IMR-90 (cell line): ENCODE measurements at regions of chr1 and their contacts with region 1.

Region 1: DNA sequence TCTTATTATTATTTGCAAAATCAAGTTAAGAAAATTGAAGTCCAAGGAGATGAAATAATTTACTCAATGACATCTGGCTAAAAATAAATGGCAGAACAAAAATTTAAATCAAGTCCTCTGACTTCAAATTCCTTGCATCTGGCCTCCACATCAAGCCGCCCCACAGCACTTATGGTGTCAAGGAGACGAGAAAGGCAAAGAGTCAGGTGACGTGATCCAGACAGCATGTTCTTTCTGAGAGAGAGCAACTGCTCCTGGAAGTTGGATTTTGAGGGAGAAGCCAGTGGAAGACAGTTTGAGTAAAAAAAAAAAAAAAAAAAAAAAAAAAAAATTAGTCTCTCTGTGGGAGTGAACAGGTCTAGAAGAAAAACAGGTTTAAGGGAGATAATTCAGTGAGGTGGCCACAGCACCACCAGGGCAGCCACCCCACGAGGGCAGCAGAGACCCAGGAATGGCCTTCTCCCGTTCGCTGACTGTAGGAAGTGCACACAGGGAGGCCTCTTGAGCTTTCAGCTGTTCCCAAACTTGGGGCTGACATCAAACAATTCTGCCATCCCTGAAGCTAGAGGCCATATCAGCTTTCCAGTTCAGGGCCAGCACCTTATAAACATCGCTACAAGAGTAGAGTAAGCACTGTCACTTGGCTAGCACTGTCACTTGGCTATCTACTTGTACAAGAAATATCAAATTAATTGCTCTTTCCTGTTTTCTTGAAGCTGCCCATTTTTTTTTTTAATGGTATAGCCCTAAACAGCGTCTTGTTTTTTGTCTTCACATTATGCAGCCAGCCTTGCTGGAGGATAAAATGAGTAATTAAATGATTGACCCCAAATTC is 7.8 kb downstream of the C1orf162 start:
- DNase-seq: peak; percentile 66
- ATAC-seq: peak; percentile 99
- H3K4me3 ChIP-seq: no peak overlapping the region
- H3K27ac ChIP-seq: no peak overlapping the region
- H3K4me1 ChIP-seq: no peaks in the 10 kb centered on the region
- H3K27me3 ChIP-seq: no peaks in the 10 kb centered on the region
- CTCF ChIP-seq: peak; percentile 92
- POLR2A ChIP-seq: peak; percentile 28; the same call in 1 of the 2 replicates
- RAD21 ChIP-seq: peak; percentile 95

Region 2: DNA sequence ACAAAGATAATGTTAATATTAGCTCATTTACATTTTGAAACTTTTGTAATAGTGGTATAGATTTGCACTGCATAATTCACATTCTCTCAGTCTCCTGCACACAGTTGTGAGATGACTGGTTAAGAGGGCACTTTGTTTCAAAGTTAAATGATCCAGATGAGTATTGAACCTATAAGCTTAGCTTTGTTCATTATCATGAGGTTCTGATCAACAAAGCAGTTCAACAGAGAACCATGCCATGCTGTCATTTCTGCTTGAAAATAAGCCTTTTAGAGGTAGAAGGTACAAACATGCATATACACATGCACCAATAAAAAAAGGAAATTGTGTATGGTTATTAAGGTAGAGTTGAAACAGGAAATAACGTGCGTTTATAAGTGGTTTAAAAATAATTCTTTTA is 142.8 kb after region 1 on chr1:
- CTCF ChIA-PET with region 1: no interaction called
- POLR2A ChIA-PET with region 1: no interaction called
- dilution Hi-C with region 1: no loop called
- in situ Hi-C with region 1: no loop called
- intact Hi-C with region 1: no loop called
- DNase-seq: no peak
- ATAC-seq: no peak
- H3K4me3 ChIP-seq: no peak overlapping the region
- H3K27ac ChIP-seq: no peak overlapping the region
- H3K4me1 ChIP-seq: peaks cover 6% of the 10 kb centered on the region
- H3K27me3 ChIP-seq: no peaks in the 10 kb centered on the region
- CTCF ChIP-seq: no peak
- POLR2A ChIP-seq: no peak
- RAD21 ChIP-seq: no peak

Region 3: DNA sequence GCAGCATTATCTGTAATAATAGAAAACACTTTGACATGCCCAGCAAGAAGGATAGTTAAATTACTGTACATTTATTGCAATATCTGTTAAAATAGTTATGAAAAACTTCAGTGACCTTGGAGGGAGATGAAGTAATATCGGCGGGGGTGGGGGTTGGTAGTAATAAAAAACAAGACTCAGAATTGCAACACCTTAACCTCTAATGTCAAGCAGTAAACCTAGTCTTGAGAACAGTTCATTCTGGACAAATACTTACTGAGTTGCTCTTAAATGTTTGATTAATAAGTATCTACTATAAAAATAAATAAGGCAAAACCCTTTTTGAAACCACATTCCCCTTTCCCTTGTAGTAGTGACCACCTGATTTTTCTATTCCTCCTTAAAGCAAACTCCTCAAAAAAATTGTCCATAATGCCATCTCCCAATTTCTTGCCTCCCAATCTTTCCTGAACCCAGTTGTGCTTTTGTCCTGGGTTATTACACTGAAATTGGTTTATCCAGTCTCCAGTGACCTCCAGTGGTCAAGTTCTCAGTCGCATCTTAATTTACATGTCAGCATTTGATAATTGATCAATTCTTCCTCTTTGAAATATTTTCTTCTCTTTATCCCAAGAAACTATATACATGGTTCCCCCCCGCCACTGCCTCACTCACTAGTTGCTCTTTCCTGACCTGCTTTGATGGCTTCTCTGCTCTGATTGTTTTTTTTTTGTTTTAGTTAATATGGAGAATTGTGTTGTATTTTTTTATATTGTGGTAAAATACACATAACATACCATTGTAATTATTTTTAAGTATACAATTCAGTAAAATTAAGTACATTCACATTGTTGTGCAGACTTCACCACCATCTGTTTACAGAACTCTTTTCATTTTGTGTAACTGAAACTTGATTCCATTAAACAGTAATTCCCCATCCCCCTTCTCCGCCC is 174.7 kb after region 1 on chr1:
- CTCF ChIA-PET with region 1: no interaction called
- POLR2A ChIA-PET with region 1: no interaction called
- dilution Hi-C with region 1: no loop called
- in situ Hi-C with region 1: no loop called
- intact Hi-C with region 1: loop called (anchors 1 kb)
- DNase-seq: peak; percentile 66
- ATAC-seq: peak; percentile 72
- H3K4me3 ChIP-seq: no peak overlapping the region
- H3K27ac ChIP-seq: no peak overlapping the region
- H3K4me1 ChIP-seq: peaks cover 8% of the 10 kb centered on the region
- H3K27me3 ChIP-seq: no peaks in the 10 kb centered on the region
- CTCF ChIP-seq: peak; percentile 72
- POLR2A ChIP-seq: 0 out of 2 replicates have a peak, but pooled peaks have one; percentile 19
- RAD21 ChIP-seq: peak; percentile 86

Region 4: DNA sequence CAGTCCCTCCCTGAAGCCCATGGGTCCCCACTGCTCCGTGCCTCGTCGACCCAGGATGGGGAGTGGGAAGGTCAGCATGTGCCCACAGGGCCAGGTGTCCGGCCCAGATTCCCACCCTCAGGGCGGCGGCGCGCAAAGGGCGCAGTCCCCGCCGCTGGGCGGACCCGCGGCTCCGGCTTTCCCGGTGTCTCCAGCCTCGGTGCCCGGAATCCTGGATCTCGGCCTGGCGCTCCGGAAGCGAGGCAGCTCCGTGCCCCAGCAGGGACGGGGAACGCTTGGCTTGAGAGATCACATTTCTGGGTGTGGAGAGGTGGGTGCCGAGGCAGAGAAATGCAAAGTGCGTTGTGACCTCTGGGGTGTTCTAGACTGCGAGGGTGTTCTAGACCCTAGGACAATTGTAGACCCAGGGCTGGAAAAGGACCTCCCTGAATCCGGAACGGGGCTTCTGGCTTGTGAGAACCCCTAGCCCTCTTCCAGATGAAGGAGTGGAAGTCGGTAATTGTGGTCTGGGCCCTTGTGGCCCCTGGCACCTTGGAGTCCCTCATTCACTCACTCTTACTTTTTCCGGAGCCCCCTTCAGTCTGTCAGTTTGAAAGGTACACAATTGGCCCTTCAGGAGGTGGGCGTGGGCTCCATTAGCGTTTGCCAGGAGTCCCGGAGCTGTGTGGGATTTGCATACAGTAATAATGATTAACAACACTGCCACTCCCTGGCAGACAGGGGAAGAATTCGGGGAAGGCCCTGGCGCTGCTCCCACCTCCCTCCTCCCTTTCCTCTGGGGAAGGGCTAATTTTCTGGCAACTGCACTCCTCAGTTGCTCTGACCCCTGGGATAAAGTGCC is 509.5 kb after region 1 on chr1:
- CTCF ChIA-PET with region 1: interaction called, 3 read pairs
- POLR2A ChIA-PET with region 1: no interaction called
- dilution Hi-C with region 1: no loop called
- in situ Hi-C with region 1: no loop called
- intact Hi-C with region 1: loop called (anchors 2 kb)
- DNase-seq: no peak
- ATAC-seq: peak; percentile 30
- H3K4me3 ChIP-seq: no peak overlapping the region
- H3K27ac ChIP-seq: no peak overlapping the region
- H3K4me1 ChIP-seq: no peaks in the 10 kb centered on the region
- H3K27me3 ChIP-seq: peaks cover 63% of the 10 kb centered on the region
- CTCF ChIP-seq: 0 out of 2 replicates have a peak, but pooled peaks have one; percentile 11
- POLR2A ChIP-seq: no peak
- RAD21 ChIP-seq: no peak

Region 5: DNA sequence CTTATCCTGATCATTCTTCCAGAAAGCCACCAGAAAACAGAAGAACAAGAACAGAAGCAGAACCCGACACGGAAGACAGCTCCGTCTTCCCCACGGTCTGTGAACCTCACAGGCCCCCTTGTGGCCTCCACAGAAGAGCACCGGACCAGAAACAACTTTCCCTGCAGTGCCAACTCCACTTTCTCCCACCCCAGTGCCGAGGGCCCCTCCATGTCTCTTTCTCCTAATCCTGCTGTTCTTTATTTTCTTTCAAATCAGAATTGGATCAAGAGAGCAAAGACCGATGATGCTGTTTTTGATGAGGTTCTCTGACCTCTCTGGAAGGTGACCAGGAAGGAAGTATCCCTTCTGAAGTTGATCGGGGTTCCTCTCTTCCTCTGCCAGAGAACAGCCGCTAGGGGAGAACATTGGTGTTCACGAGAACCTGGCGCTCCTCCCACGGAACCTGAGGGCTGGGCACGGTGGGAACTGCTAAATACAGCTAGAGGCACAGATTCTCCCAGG is 855.5 kb after region 1 on chr1:
- CTCF ChIA-PET with region 1: interaction called, 4 read pairs
- POLR2A ChIA-PET with region 1: no interaction called
- dilution Hi-C with region 1: no loop called
- in situ Hi-C with region 1: no loop called
- intact Hi-C with region 1: loop called (anchors 1 kb)
- DNase-seq: peak; percentile 31
- ATAC-seq: peak; percentile 87
- H3K4me3 ChIP-seq: no peak overlapping the region
- H3K27ac ChIP-seq: no peak overlapping the region
- H3K4me1 ChIP-seq: no peaks in the 10 kb centered on the region
- H3K27me3 ChIP-seq: peaks cover 32% of the 10 kb centered on the region
- CTCF ChIP-seq: peak; percentile 52
- POLR2A ChIP-seq: no peak
- RAD21 ChIP-seq: peak; percentile 61

Region 6: GRCh38 chr1:112369392-112370285 is 888.0 kb after region 1 on chr1:
- CTCF ChIA-PET with region 1: interaction called, 3 read pairs
- POLR2A ChIA-PET with region 1: no interaction called
- dilution Hi-C with region 1: no loop called
- in situ Hi-C with region 1: loop called (anchors 25 kb)
- intact Hi-C with region 1: loop called (anchors 1 kb)
- DNase-seq: peak; percentile 75
- ATAC-seq: peak; percentile 100
- H3K4me3 ChIP-seq: no peak overlapping the region
- H3K27ac ChIP-seq: no peak overlapping the region
- H3K4me1 ChIP-seq: no peaks in the 10 kb centered on the region
- H3K27me3 ChIP-seq: peaks cover 34% of the 10 kb centered on the region
- CTCF ChIP-seq: peak; percentile 99
- POLR2A ChIP-seq: no peak
- RAD21 ChIP-seq: peak; percentile 85